ENCODE measurements at regions of chr10 and their contacts with region 1.

Region 1: DNA sequence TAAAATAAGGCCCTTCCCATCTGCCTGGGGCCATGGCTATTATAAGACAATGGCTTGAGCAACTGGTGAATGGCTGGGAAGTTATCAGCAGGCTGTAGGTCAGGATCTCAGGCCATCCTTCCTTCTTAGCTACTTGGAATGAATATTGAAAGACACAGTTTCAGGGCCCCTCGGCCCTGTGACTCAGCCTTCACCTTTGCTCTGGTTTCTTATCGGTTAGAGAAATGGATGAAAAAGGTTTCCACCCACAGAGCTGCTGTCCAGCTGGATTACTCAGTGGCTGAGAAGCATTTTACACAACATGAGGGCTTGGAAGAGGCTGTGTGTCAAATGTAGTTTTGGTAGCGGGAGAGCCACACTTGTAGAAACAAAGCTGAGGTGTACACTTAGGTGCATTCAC is 9.4 kb downstream of the ACSL5 start:
- DNase-seq: peak; percentile 63 to 90 (median 76)
- ATAC-seq: peak; percentile 96
- H3K4me3 ChIP-seq: no peak overlapping the region
- H3K27ac ChIP-seq: peak overlapping the region; percentile 54; the same call in 2 of the 3 replicates
- H3K4me1 ChIP-seq: peaks cover 11 to 15% of the 10 kb centered on the region in 2 experiments; a peak in 4 of 5 replicates
- H3K27me3 ChIP-seq: no peaks in the 10 kb centered on the region
- CTCF ChIP-seq: no peak
- EP300 ChIP-seq: peak; percentile 64; the same call in 1 of the 2 replicates
- POLR2A ChIP-seq: no peak
- RAD21 ChIP-seq: peak in 1 of 2 experiments; percentile 17; a peak in 1 of 4 replicates

Region 2: DNA sequence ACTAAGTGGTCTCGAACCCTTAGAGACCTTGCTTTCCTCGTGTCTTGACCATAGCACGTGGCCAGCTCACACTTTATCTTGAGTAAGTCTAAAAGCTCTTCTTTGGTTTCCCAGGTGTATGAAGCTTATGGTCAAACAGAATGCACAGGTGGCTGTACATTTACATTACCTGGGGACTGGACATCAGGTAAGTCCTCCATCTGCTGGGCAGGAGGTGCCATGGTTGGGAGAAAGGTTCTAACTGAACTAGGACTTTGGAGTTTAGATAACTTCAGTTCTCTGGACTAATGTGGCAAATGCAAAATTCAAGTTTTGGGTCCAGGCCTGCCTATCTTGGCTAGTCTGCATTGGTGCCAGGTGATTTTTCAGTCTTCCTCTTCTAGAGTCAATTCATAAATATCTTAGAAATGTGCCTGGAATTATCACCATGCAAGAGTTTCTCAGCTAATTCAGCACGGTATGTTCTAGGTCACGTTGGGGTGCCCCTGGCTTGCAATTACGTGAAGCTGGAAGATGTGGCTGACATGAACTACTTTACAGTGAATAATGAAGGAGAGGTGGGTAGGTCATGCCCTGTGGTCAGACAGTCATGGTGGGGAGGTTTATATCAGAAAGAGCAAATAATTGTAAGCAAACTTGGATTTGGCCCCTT is 38.3 kb after region 1 on chr10:
- CTCF ChIA-PET with region 1: no interaction called
- POLR2A ChIA-PET with region 1: no interaction called
- in situ Hi-C with region 1: no loop called
- intact Hi-C with region 1: loop called (anchors 2 kb)
- DNase-seq: no peak
- ATAC-seq: no peak
- H3K4me3 ChIP-seq: no peak overlapping the region
- H3K27ac ChIP-seq: no peak overlapping the region
- H3K4me1 ChIP-seq: no peaks in the 10 kb centered on the region
- H3K27me3 ChIP-seq: no peaks in the 10 kb centered on the region
- CTCF ChIP-seq: no peak
- EP300 ChIP-seq: no peak
- POLR2A ChIP-seq: no peak
- RAD21 ChIP-seq: no peak